ENCODE measurements at regions of chr15 and their contacts with region 1.

Region 1: GRCh38 chr15:96796841-96797240 is 466.3 kb downstream of the NR2F2 start:
- DNase-seq: no peak
- H3K4me3 ChIP-seq: no peak overlapping the region
- H3K27ac ChIP-seq: no peak overlapping the region
- H3K4me1 ChIP-seq: no peaks in the 10 kb centered on the region
- H3K27me3 ChIP-seq: peaks cover 0 to 17% of the 10 kb centered on the region in 2 donors
- CTCF ChIP-seq: no peak
- POLR2A ChIP-seq: no peak

Region 2: GRCh38 chr15:96750361-96750760 is 46.5 kb before region 1 on chr15:
- intact Hi-C with region 1: loop called (anchors 2 kb)
- DNase-seq: no peak
- H3K4me3 ChIP-seq: no peak overlapping the region
- H3K27ac ChIP-seq: no peak overlapping the region
- H3K4me1 ChIP-seq: no peaks in the 10 kb centered on the region
- H3K27me3 ChIP-seq: no peaks in the 10 kb centered on the region
- CTCF ChIP-seq: no peak
- POLR2A ChIP-seq: no peak

Region 3: DNA sequence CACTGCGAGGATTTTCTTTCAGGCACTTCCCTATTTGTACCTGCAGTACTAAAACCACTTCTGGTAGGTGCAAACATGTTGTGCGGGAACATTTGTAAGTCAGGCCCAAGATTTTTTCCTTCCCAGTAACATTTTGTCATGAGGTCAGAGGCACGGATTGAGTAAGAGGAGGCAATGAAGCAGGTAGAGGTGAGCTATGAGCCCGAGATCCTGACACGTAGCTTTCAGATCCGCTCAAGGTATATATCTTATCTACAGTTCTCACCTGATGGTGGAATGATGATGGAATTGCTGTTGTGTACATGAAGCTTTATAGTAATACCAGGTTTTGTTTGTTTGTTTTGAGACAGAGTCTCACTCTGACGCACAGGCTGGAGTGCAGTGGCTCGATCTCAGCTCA is 31.1 kb after region 1 on chr15:
- intact Hi-C with region 1: loop called (anchors 2 kb)
- DNase-seq: no peak
- H3K4me3 ChIP-seq: no peak overlapping the region
- H3K27ac ChIP-seq: no peak overlapping the region
- H3K4me1 ChIP-seq: no peaks in the 10 kb centered on the region
- H3K27me3 ChIP-seq: no peaks in the 10 kb centered on the region
- CTCF ChIP-seq: no peak
- POLR2A ChIP-seq: no peak

Measured in breast epithelium (tissue), 4 donors.